Activated CD4-positive, alpha-beta T cell treated with anti-CD3 and anti-CD28 coated beads, Interleukin-2, amount 10 ng/mL, durations not matched to agents 24 days and 14 days (primary cell): ENCODE measurements at regions of chr5 and their contacts with region 1.

Region 1: GRCh38 chr5:83076742-83077661 is at the starts of genes TMEM167A and XRCC4:
- DNase-seq: peak; percentile 98
- H3K4me3 Mint-ChIP-seq: peak within 1 kb of the TSS; percentile 97
- H3K27ac Mint-ChIP-seq: peak within 1 kb of the TSS; percentile 98
- H3K4me1 Mint-ChIP-seq: peaks cover 35% of the 10 kb centered on the region
- H3K27me3 Mint-ChIP-seq: no peaks in the 10 kb centered on the region
- total RNA-seq, gene TMEM167A: 82.0 and 87.4 TPM in 2 replicates
- total RNA-seq, gene XRCC4: 11.4 and 11.6 TPM in 2 replicates

Region 2: GRCh38 chr5:82278095-82278918 is 798.7 kb before region 1 on chr5 and contains the start of gene RPS23:
- intact Hi-C with region 1: loop called (anchors 1 kb)
- DNase-seq: peak; percentile 96
- H3K4me3 Mint-ChIP-seq: peak within 1 kb of the TSS; percentile 89
- H3K27ac Mint-ChIP-seq: peak within 1 kb of the TSS; percentile 98
- H3K4me1 Mint-ChIP-seq: peaks cover 32% of the 10 kb centered on the region
- H3K27me3 Mint-ChIP-seq: no peaks in the 10 kb centered on the region
- total RNA-seq, gene RPS23: 2,481 and 2,489 TPM in 2 replicates

Region 3: GRCh38 chr5:83473346-83474163 is 396.6 kb after region 1 on chr5:
- intact Hi-C with region 1: loop called (anchors 5 kb)
- DNase-seq: peak; percentile 86
- H3K4me3 Mint-ChIP-seq: peak overlapping the region; percentile 96
- H3K27ac Mint-ChIP-seq: peak overlapping the region; percentile 3
- H3K4me1 Mint-ChIP-seq: peaks cover 25% of the 10 kb centered on the region
- H3K27me3 Mint-ChIP-seq: peaks cover 77% of the 10 kb centered on the region